ENCODE measurements at regions of chr12 and their contacts with region 1.

Region 1: DNA sequence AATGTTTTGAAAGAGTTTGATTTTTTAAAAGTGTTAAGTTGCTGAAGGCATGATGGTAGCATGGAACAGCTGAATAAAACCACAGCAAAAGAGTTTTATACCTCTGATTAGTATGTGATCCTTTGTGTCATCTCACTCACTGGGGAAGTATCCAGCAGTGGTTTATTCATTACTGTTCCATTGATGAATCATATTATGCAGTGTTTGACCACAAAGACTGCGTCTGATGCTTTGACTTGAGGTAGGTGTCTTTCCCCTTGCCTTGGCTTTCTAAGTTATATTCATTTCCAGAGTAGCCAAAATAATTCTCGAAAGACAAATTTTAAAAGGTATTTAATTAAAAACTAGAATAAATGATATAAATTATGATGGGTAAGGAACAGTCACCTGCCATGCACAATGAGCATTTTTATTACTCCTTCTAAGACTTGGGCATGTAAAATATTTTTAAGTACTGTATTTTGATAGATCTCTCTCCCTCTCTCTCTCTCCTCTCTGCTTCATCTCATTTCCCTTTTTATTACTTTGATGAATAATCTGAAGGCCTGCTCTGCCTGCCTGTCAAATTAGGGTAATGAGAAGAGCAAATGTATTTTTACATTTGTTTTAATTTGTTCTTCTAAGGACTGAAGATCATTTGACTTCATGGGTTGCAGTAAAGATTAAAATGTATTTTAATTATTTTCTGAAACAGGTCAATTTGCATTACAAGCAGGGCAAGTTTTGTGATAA is 164.9 kb downstream of the NAV3 start:
- DNase-seq: no peak
- ATAC-seq: no peak

Region 2: DNA sequence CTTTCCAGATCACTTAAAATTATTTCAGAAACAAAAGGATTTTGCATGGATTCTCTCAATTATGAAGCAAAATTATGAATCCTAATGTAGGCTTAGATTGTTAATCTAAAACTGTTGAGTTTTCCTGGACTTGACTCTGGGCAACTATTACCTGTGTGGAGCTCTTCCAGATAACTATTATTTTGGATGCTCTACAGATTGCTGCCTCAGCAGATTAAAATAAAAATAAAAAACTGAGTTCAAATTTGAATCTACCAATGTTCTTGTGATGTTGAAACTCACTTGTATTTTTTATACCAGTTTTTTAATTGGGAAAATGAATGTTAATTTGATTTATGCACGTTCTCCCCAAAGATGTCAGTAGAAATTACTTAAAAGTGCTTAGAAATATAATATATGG is 285.4 kb before region 1 on chr12:
- intact Hi-C with region 1: no loop called
- DNase-seq: no peak
- ATAC-seq: no peak

Region 3: GRCh38 chr12:78120866-78121560 is 125.4 kb after region 1 on chr12:
- intact Hi-C with region 1: loop called (anchors 10 kb)
- DNase-seq: no peak
- ATAC-seq: no peak

Measured in Right ventricle myocardium inferior (tissue), 1 donor.